Activated CD8-positive, alpha-beta T cell treated with anti-CD3 and anti-CD28 coated beads for 36 hours (primary cell): ENCODE measurements at regions of chr6 and their contacts with region 1.

Region 1: DNA sequence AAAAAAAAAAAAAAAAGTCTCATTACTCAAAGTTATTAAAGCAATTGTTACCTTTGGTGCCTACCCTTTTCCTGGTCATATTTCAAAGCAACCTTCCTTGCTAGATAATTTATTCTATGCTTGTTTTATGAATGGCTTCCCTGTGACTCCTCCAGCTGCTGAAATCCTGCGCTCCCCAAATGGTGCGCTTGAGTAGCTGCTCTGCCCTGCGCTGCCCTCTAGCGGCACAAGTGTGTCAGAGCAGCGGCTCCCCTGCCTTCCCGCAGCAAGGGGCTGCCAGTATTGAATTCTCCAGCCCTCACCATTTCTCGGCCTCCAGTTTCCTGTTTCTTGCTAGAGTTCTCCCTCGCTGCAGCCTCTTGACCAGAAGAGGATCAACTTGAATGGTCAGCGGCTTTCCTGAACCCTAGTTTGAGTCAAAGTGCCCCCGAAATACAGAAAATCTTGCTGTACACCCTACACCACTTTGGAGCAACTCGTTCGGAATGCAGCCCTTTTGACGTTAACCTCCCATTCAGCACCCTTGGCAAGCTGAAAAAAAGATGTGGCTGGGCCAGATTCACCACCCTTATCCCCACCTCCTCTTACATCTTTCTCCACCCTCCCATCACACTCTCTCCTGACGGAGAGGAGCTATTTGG is 60.4 kb upstream of the KLHL31 start:
- DNase-seq: peak; percentile 82
- ATAC-seq: peak; percentile 92
- H3K4me3 Mint-ChIP-seq: no peak overlapping the region
- H3K27ac Mint-ChIP-seq: no peak overlapping the region
- H3K4me1 Mint-ChIP-seq: peaks cover 7% of the 10 kb centered on the region
- H3K27me3 Mint-ChIP-seq: peaks cover 11% of the 10 kb centered on the region
- CTCF ChIP-seq: peak; percentile 82

Region 2: DNA sequence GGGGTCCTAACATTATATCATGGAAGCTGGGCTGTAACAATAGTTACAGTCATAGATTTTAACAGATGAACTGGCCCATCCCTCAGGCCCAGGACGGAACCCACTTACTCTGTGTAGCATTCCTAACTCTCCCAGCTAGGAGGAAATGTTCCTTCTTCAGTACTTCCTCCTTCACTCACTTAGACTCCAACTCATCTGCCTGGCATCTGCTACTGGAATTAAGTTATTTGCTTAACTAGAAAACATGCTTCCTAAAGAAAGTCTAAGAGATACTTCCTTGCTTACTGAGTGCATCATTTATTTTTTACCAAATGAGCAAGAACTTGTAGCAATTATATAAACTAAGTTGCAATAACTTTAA is 201.5 kb before region 1 on chr6:
- CTCF ChIA-PET with region 1: interaction called, 10 read pairs
- POLR2A ChIA-PET with region 1: no interaction called
- intact Hi-C with region 1: no loop called
- DNase-seq: no peak
- ATAC-seq: no peak
- H3K4me3 Mint-ChIP-seq: no peak overlapping the region
- H3K27ac Mint-ChIP-seq: no peak overlapping the region
- H3K4me1 Mint-ChIP-seq: peaks cover 13% of the 10 kb centered on the region
- H3K27me3 Mint-ChIP-seq: no peaks in the 10 kb centered on the region
- CTCF ChIP-seq: no peak

Region 3: DNA sequence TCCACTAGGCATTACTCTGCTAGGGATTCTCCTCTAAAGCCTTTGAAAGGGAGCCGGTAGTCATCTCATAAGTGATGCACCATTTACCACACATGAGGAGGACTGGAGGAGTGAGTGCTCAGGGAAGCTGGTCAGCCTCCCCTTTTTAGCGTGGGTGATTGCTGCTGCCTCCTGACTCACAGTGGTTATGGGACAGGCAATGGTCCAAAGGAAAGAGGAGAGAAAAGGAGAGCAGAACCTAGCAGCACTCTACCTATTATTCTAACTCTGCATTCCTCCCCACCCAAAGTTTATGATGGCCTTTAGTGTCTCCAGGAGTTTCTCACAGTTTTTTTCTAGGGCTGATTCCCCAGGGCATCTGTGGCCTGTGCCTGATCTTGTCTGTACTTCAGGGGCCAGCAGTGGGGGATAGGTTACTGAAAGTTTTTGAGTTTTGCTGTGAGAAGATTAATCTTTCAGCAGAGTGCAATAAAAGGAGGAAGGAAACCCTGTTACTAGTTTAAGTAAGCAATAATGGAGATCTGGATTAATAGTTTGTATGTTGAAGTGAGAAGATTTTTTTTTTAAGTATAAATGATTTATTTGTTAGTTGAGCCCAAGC is 144.6 kb before region 1 on chr6:
- CTCF ChIA-PET with region 1: no interaction called
- POLR2A ChIA-PET with region 1: no interaction called
- intact Hi-C with region 1: no loop called
- DNase-seq: no peak
- ATAC-seq: peak; percentile 7
- H3K4me3 Mint-ChIP-seq: no peak overlapping the region
- H3K27ac Mint-ChIP-seq: no peak overlapping the region
- H3K4me1 Mint-ChIP-seq: peaks cover 3% of the 10 kb centered on the region
- H3K27me3 Mint-ChIP-seq: no peaks in the 10 kb centered on the region
- CTCF ChIP-seq: no peak

Region 4: GRCh38 chr6:53659458-53659857 is 66.5 kb before region 1 on chr6:
- CTCF ChIA-PET with region 1: interaction called, 21 read pairs
- POLR2A ChIA-PET with region 1: no interaction called
- intact Hi-C with region 1: loop called (anchors 5 kb)
- DNase-seq: no peak
- ATAC-seq: no peak
- H3K4me3 Mint-ChIP-seq: no peak overlapping the region
- H3K27ac Mint-ChIP-seq: no peak overlapping the region
- H3K4me1 Mint-ChIP-seq: no peaks in the 10 kb centered on the region
- H3K27me3 Mint-ChIP-seq: peaks cover 7% of the 10 kb centered on the region
- CTCF ChIP-seq: no peak

Region 5: DNA sequence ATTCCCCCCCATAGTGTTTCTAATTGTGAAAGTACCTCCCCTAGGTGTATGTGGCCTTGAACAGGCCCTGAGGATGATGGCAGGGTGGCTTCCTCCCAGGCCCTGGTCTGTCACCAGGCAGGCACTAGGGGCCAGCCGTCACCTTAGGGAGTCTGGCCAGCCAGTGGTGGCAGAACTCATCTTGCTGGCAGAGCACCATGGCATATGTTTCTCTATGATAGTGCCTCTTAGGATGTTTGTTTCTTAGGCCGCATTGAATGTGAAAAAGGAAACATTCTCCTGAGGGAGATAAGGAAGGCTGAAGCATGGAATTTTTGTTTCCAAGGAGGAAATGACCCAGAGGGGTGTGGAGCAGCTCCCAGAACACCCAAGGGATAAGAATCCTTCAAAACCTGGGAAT is 15.1 kb before region 1 on chr6:
- CTCF ChIA-PET with region 1: interaction called, 34 read pairs
- POLR2A ChIA-PET with region 1: no interaction called
- intact Hi-C with region 1: no loop called
- DNase-seq: no peak
- ATAC-seq: no peak
- H3K4me3 Mint-ChIP-seq: no peak overlapping the region
- H3K27ac Mint-ChIP-seq: no peak overlapping the region
- H3K4me1 Mint-ChIP-seq: no peaks in the 10 kb centered on the region
- H3K27me3 Mint-ChIP-seq: peaks cover 7% of the 10 kb centered on the region
- CTCF ChIP-seq: no peak